ENCODE measurements at regions of chr4 and their contacts with region 1.

Region 1: DNA sequence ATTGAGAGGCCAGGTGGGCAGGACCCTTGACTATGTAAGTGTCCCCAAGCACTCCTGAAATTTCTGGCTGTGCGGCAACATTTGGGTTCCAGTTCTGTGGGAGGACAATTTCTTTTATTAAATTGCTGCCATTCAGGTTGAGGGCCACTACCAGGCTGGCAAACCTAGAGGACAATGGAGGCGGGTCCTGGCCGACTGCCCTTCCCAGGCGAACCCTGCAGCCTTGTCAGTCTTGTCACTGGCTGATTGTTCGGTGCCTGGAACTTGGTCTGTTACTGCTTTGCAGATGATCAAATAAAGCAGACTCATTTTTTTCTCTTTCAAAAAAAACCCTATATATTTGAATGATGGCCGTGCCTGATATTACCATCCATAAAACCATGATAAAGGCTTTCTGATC is 6.6 kb upstream of the TMEM128 start:
- DNase-seq: no peak
- H3K4me3 ChIP-seq: no peak overlapping the region
- H3K27ac ChIP-seq: no peak overlapping the region
- H3K4me1 ChIP-seq: peaks cover 3% of the 10 kb centered on the region
- H3K27me3 ChIP-seq: no peaks in the 10 kb centered on the region
- CTCF ChIP-seq: no peak

Region 2: GRCh38 chr4:4334798-4335520 is 80.3 kb after region 1 on chr4:
- intact Hi-C with region 1: loop called (anchors 5 kb)
- DNase-seq: peak; percentile 41
- H3K4me3 ChIP-seq: no peak overlapping the region
- H3K27ac ChIP-seq: no peak overlapping the region
- H3K4me1 ChIP-seq: peaks cover 10% of the 10 kb centered on the region
- H3K27me3 ChIP-seq: peaks cover 13% of the 10 kb centered on the region
- CTCF ChIP-seq: peak; percentile 80

Region 3: GRCh38 chr4:4396638-4397440 is 142.2 kb after region 1 on chr4:
- intact Hi-C with region 1: no loop called
- DNase-seq: no peak
- H3K4me3 ChIP-seq: no peak overlapping the region
- H3K27ac ChIP-seq: no peak overlapping the region
- H3K4me1 ChIP-seq: no peaks in the 10 kb centered on the region
- H3K27me3 ChIP-seq: peaks cover 96% of the 10 kb centered on the region
- CTCF ChIP-seq: no peak

Measured in left ventricle myocardium inferior (tissue), 1 donor.